HCT116 (cell line): ENCODE measurements at regions of chr15 and their contacts with region 1.

Region 1: DNA sequence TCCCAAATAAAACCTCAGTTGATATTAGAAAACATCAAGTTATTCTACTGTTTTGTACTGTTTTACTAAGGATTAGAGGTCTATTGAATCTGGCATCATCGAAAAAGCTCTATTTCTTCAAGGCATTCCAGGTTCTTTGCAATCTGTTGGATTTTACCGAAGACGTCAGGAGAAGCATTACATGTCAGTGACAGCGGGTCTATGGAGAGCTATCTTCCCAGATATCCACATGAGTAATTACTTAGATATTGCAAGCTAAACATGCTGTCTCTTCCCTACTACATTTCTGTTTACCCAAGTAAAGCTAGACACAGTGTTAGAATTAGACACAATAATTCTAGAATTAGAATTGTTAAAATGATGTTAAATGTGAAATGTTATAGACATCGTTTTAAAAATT is 10.8 kb upstream of the GOLGA6L2 start:
- DNase-seq: no peak
- ATAC-seq: no peak
- H3K4me3 ChIP-seq: no peak overlapping the region
- H3K27ac ChIP-seq: no peak overlapping the region
- H3K4me1 ChIP-seq: no peaks in the 10 kb centered on the region
- H3K27me3 ChIP-seq: peaks cover 11% of the 10 kb centered on the region
- CTCF ChIP-seq: no peak
- POLR2A ChIP-seq: no peak
- RAD21 ChIP-seq: no peak

Region 2: DNA sequence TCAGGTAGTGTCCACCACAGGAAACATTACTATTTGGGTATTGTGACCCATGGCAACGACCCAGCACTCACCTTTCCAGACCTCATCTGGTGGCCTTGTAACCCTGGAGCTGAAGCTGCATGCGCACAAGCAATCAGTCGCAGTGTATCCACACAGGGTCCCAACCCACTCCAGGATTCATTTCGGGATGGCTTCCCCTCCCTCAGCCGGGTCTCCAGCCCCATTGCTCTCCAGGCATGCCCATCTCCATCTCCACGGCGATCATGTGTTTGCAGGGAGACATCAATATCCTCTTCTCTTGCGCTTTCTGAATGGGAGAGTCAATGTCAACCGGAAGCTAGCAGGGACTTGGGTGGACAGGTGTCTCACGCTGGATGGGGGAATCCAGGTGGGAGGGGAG is 46.0 kb before region 1 on chr15:
- CTCF ChIA-PET with region 1: no interaction called
- POLR2A ChIA-PET with region 1: no interaction called
- RAD21 ChIA-PET with region 1: no interaction called
- intact Hi-C with region 1: loop called (anchors 2 kb)
- DNase-seq: no peak
- ATAC-seq: no peak
- H3K4me3 ChIP-seq: no peak overlapping the region
- H3K27ac ChIP-seq: no peak overlapping the region
- H3K4me1 ChIP-seq: no peaks in the 10 kb centered on the region; a peak in 1 of 4 replicates
- H3K27me3 ChIP-seq: no peaks in the 10 kb centered on the region
- CTCF ChIP-seq: no peak
- POLR2A ChIP-seq: no peak
- RAD21 ChIP-seq: no peak

Region 3: DNA sequence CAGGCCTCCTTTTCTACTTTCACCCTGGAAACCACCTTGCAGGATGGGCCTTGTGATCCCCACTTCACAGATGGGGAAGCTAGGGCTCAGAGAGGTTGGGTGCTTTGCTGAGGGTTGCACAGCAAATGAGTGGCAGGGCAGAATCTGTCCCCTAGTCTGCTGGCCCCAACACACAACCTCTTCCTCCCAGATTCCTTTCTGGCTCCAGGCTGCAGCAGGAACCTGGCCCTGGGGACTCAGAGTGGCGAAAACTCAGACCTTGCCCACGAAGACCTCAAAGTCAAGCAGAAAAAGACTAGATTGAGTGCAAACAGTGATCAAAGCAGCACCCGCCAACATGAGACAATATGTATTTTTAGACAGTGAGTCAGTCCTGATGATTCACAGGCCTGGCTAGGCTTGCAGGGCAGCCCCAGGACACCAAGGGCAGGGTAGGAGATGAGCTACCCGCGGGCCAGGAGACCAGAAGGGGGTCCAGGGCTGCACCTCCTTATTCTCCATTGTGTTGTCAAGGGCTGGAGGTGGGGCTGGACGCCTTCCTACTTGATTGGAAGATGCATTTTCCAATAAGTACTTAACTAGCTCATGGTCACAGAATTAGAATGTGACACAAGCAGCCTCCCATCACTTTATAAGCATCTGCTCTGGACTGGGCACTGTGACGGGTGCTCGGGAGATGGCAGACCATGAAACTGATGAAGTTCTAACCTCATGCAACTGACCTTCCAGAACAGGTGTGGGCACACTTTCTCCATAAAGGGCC is 34.8 kb before region 1 on chr15:
- CTCF ChIA-PET with region 1: no interaction called
- POLR2A ChIA-PET with region 1: no interaction called
- RAD21 ChIA-PET with region 1: no interaction called
- intact Hi-C with region 1: no loop called
- DNase-seq: no peak
- ATAC-seq: peak; percentile 93
- H3K4me3 ChIP-seq: no peak overlapping the region
- H3K27ac ChIP-seq: peak overlapping the region; percentile 33
- H3K4me1 ChIP-seq: peaks cover 20 to 32% of the 10 kb centered on the region in 2 experiments
- H3K27me3 ChIP-seq: no peaks in the 10 kb centered on the region
- CTCF ChIP-seq: no peak
- POLR2A ChIP-seq: no peak
- RAD21 ChIP-seq: no peak

Region 4: DNA sequence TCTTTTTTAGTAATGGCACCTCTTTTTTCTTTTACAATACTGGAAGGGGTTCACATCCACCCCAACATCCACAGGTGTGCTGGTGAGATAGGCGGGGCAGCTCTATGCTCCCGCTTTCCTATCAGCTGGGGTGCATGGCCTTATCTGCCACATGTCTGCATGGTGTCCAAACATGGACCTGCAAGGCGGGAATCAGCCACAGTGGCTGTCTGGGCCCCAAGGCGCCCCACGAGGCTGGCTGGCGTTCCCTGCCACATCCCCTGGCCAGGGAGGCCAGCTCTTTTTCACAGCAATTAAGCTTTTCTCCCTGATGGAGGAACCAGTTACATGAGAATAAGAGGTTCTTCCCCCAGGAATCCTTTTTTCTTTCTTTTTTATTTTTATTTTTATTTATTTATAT is 20.0 kb after region 1 on chr15:
- CTCF ChIA-PET with region 1: no interaction called
- POLR2A ChIA-PET with region 1: no interaction called
- RAD21 ChIA-PET with region 1: no interaction called
- intact Hi-C with region 1: no loop called
- DNase-seq: no peak
- ATAC-seq: no peak
- H3K4me3 ChIP-seq: no peak overlapping the region
- H3K27ac ChIP-seq: no peak overlapping the region
- H3K4me1 ChIP-seq: no peaks in the 10 kb centered on the region
- H3K27me3 ChIP-seq: peaks cover 20% of the 10 kb centered on the region; the same call in 1 of the 2 replicates
- CTCF ChIP-seq: no peak
- POLR2A ChIP-seq: no peak
- RAD21 ChIP-seq: no peak